ENCODE measurements at regions of chr15 and their contacts with region 1.

Region 1: GRCh38 chr15:85296615-85297402 is 83.6 kb upstream of the AKAP13 start:
- DNase-seq: peak; percentile 82
- ATAC-seq: peak; percentile 100
- H3K4me3 Mint-ChIP-seq: peak overlapping the region; percentile 36
- H3K27ac Mint-ChIP-seq: no peak overlapping the region
- H3K4me1 Mint-ChIP-seq: peaks cover 13% of the 10 kb centered on the region
- H3K27me3 Mint-ChIP-seq: no peaks in the 10 kb centered on the region
- CTCF ChIP-seq: peak; percentile 88

Region 2: GRCh38 chr15:85276911-85277310 is 19.9 kb before region 1 on chr15:
- CTCF ChIA-PET with region 1: no interaction called
- POLR2A ChIA-PET with region 1: no interaction called
- intact Hi-C with region 1: no loop called
- DNase-seq: no peak
- ATAC-seq: no peak
- H3K4me3 Mint-ChIP-seq: no peak overlapping the region
- H3K27ac Mint-ChIP-seq: no peak overlapping the region
- H3K4me1 Mint-ChIP-seq: peaks cover 4% of the 10 kb centered on the region
- H3K27me3 Mint-ChIP-seq: no peaks in the 10 kb centered on the region
- CTCF ChIP-seq: no peak

Region 3: GRCh38 chr15:85312486-85312885 is 15.7 kb after region 1 on chr15:
- CTCF ChIA-PET with region 1: interaction called, 21 read pairs
- POLR2A ChIA-PET with region 1: interaction called, 3 read pairs
- intact Hi-C with region 1: no loop called
- DNase-seq: peak; percentile 44
- ATAC-seq: peak; percentile 52
- H3K4me3 Mint-ChIP-seq: peak overlapping the region; percentile 25
- H3K27ac Mint-ChIP-seq: peak overlapping the region; percentile 60
- H3K4me1 Mint-ChIP-seq: peaks cover 53% of the 10 kb centered on the region
- H3K27me3 Mint-ChIP-seq: no peaks in the 10 kb centered on the region
- CTCF ChIP-seq: no peak

Region 4: DNA sequence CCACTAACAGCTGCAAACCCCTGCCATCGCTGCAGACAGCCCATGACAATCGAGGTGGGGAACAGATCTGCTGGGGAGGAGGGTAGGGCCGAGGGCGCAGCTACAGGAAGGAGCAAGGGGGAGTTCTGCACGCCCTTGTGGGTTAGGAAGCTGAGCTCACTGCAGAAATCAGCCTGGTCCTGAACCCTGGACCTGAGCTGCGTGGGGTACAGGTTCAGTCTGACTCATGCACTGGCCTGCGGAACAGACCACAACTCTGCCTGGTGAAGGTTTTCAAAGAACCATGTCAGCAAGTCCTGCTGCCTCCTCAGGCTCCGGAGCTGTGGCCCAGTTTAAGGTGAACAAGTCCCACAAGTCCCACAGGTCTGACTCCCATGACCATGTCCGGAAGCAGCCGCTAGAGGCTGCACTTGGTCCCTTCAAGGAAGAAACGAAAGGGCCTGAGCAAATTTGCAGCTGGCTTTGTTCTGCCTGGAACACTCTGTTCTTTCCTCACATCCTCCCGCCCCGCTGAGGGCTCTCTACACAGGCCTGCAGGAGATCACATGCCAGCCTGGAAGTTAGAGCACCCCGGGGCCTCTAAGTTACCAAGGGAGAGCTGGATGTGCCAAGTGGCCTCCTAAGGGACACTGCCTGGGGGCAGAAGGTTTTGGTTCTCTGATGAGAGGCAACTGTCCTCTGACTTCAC is 34.2 kb after region 1 on chr15:
- CTCF ChIA-PET with region 1: interaction called, 26 read pairs
- POLR2A ChIA-PET with region 1: interaction called, 3 read pairs
- intact Hi-C with region 1: no loop called
- DNase-seq: peak; percentile 90
- ATAC-seq: peak; percentile 87
- H3K4me3 Mint-ChIP-seq: peak overlapping the region; percentile 80
- H3K27ac Mint-ChIP-seq: peak overlapping the region; percentile 92
- H3K4me1 Mint-ChIP-seq: peaks cover 40% of the 10 kb centered on the region
- H3K27me3 Mint-ChIP-seq: no peaks in the 10 kb centered on the region
- CTCF ChIP-seq: peak; percentile 61

Region 5: GRCh38 chr15:85407804-85408746 is 111.3 kb after region 1 on chr15:
- CTCF ChIA-PET with region 1: interaction called, 90 read pairs
- POLR2A ChIA-PET with region 1: no interaction called
- intact Hi-C with region 1: no loop called
- DNase-seq: peak; percentile 55
- ATAC-seq: peak; percentile 71
- H3K4me3 Mint-ChIP-seq: peak overlapping the region; percentile 12
- H3K27ac Mint-ChIP-seq: peak overlapping the region; percentile 84
- H3K4me1 Mint-ChIP-seq: peaks cover 79% of the 10 kb centered on the region
- H3K27me3 Mint-ChIP-seq: no peaks in the 10 kb centered on the region
- CTCF ChIP-seq: no peak

Region 6: DNA sequence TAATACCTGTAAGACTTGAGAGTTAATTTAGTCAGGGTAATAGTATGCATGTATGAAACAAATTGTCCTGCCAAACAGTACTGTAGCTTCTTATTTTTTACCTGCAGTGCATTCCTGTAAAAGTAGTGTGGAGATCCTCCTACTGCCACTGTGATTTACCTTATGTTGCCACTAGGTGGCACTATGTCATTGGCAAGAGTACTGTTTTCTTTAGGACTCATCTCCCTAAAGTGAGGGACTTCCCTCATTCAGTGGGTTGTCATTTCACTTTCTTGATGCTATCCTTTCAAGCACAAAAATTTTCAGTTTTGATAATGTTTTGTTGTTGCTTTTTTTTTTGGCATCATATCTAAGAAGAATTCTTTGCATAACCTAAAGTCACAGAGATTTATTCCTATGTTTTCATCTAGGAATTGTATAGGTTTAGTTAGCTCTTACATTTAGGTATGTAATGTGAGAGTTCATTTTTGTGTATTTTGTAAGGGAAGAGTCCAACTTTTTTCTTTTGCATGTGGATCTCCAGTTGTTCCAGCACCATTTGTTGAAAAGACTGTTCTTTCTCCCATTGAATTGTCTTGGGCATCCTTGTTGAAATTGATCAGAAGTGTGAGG is 189.3 kb after region 1 on chr15:
- CTCF ChIA-PET with region 1: interaction called, 18 read pairs
- POLR2A ChIA-PET with region 1: interaction called, 3 read pairs
- intact Hi-C with region 1: no loop called
- DNase-seq: peak; percentile 74
- ATAC-seq: peak; percentile 94
- H3K4me3 Mint-ChIP-seq: no peak overlapping the region
- H3K27ac Mint-ChIP-seq: peak overlapping the region; percentile 39
- H3K4me1 Mint-ChIP-seq: peaks cover 60% of the 10 kb centered on the region
- H3K27me3 Mint-ChIP-seq: no peaks in the 10 kb centered on the region
- CTCF ChIP-seq: peak; percentile 90